ENCODE measurements at regions of chr1 and their contacts with region 1.

Region 1: GRCh38 chr1:28648474-28649198 is at the start of gene RNU11:
- DNase-seq: peak; percentile 82
- H3K4me3 Mint-ChIP-seq: peak within 1 kb of the TSS; percentile 71
- H3K27ac Mint-ChIP-seq: peak within 1 kb of the TSS; percentile 100
- H3K4me1 Mint-ChIP-seq: peaks cover 20% of the 10 kb centered on the region
- H3K27me3 Mint-ChIP-seq: no peaks in the 10 kb centered on the region
- CTCF ChIP-seq: no peak
- total RNA-seq, gene RNU11: not detected in 2 replicates

Region 2: DNA sequence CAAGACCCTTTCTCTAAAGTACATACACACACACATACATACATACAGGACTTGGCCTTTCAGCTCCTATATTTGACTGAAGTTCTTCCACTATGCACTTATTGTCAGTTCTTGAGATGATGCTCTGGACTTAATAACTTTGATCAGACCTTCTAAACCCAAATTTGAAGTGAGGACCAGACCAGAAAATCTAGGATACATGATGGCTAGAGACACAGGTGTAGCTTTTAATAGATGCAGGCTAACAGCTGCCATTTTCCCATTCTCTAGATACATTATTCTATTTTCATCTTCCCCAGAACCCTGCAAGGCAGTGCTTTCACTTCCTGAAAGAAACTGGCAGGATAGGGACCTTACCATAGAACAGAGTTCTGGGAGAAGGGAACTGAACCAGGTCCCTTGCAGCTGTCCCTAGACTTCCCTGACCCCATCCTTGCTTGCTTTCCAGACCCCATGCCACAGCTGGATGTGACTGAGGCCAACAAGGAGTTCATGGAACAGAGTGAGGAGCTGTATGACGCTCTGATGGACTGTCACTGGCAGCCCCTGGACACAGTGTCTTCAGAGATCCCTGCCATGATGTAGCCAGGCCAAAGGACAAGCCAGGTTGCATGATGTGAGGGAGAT is 71.5 kb before region 1 on chr1:
- CTCF ChIA-PET with region 1: no interaction called
- intact Hi-C with region 1: no loop called
- DNase-seq: no peak
- H3K4me3 Mint-ChIP-seq: no peak overlapping the region
- H3K27ac Mint-ChIP-seq: peak overlapping the region; percentile 44
- H3K4me1 Mint-ChIP-seq: peaks cover 24% of the 10 kb centered on the region
- H3K27me3 Mint-ChIP-seq: no peaks in the 10 kb centered on the region
- CTCF ChIP-seq: no peak

Region 3: DNA sequence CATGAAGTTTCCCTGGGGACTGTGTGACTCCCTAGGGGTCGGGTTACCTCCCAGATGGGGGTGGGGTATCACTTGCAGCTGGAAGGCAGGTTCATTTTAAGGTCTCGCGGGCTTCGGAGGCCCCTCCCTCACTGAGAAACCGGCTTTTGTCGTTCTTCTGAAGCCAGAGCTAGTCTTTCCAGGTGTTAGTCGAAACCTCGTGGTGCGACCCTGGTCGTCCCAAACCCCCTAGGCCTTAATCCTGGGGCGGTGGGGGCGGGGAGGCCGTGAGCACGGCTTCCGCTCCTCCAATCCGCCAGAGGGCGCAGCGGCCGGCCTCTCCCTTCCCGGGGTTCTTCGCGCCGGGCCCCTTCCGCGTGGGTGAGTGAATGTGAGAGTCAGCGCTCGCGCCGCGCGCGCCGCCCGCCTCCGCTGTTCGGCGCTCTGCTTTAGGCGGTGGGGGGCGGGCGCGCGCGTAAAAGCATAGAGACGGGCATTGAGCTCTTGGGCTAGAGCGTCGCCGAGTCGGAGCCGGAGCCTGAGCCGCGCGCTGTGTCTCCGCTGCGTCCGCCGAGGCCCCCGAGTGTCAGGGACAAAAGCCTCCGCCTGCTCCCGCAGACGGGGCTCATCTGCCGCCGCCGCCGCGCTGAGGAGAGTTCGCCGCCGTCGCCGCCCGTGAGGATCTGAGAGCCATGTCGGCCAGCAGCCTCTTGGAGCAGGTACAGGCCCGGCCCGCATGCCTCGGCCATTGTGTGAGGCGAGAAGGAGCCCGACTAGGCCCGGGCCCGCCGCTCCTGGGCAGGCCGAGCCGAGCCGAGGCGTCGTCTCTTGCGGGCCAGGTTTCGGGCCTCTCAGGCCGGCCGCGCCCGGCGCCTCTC is 88.0 kb after region 1 on chr1 and contains the start of gene YTHDF2:
- CTCF ChIA-PET with region 1: interaction called, 6 read pairs
- intact Hi-C with region 1: loop called (anchors 5 kb)
- DNase-seq: peak; percentile 97
- H3K4me3 Mint-ChIP-seq: peak within 1 kb of the TSS; percentile 95
- H3K27ac Mint-ChIP-seq: peak within 1 kb of the TSS; percentile 82
- H3K4me1 Mint-ChIP-seq: peaks cover 12% of the 10 kb centered on the region
- H3K27me3 Mint-ChIP-seq: no peaks in the 10 kb centered on the region
- CTCF ChIP-seq: peak; percentile 97
- total RNA-seq, gene YTHDF2: 106 and 117 TPM in 2 replicates

Measured in Calu3 (cell line).